ENCODE measurements at regions of chr4 and their contacts with region 1.

Region 1: GRCh38 chr4:172838108-172838507 is 330.5 kb upstream of the GALNT7 start:
- DNase-seq: no peak
- H3K4me3 ChIP-seq: no peak overlapping the region
- H3K27ac ChIP-seq: no peak overlapping the region
- H3K4me1 ChIP-seq: no peaks in the 10 kb centered on the region
- H3K27me3 ChIP-seq: no peaks in the 10 kb centered on the region
- CTCF ChIP-seq: no peak
- POLR2A ChIP-seq: no peak

Region 2: GRCh38 chr4:172596206-172596605 is 241.9 kb before region 1 on chr4:
- intact Hi-C with region 1: loop called (anchors 5 kb)
- DNase-seq: peak; percentile 3 to 6
- H3K4me3 ChIP-seq: no peak overlapping the region
- H3K27ac ChIP-seq: no peak overlapping the region
- H3K4me1 ChIP-seq: no peaks in the 10 kb centered on the region
- H3K27me3 ChIP-seq: no peaks in the 10 kb centered on the region
- CTCF ChIP-seq: peak in 3 of 6 experiments; percentile 13 to 42 (median 25)
- POLR2A ChIP-seq: no peak

Region 3: DNA sequence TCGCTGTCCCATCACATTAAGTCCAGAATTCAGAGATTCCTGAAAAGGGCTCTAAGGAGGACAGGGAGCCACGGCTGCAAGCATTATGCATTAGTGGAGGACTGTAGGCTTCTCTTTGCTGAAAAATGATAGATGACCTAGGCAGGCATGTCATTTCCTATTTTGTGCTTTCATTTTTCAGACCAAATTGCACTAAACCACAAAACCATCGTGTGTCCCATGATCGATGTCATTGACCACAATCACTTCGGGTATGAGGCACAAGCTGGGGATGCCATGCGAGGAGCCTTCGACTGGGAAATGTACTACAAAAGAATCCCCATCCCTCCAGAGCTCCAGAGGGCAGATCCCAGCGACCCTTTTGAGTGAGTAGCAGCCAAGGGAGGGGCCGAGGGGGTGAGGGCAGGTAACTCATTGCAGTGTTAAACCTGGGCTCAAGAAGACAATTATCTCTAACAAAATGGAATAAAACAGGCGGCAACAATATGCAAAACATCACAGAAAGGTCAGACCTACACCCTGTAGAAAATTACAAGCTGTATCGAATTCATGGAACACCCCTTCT is 24.7 kb before region 1 on chr4:
- intact Hi-C with region 1: no loop called
- DNase-seq: no peak
- H3K4me3 ChIP-seq: no peak overlapping the region
- H3K27ac ChIP-seq: no peak overlapping the region
- H3K4me1 ChIP-seq: peaks cover 3 to 11% of the 10 kb centered on the region in 2 donors
- H3K27me3 ChIP-seq: no peaks in the 10 kb centered on the region
- CTCF ChIP-seq: no peak
- POLR2A ChIP-seq: no peak

Region 4: DNA sequence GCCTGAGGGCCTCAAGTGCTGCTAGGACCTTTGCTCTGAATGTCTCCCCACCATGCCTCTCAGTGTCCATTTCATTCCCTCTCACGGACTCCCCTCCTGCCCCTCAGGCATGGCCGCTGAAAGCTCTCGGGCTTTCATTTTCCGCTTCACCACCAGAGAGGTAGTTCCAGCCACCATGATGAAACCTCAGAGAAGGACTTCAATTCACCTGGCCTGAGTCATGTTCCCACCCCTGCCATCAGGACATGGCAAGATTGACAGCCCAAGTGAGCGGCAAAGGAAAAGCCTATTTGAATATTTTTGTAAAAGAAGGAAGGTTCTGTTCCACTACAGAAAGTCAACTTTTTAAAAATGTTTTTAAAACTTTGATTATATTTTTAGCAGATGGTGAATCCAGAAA is 81.2 kb after region 1 on chr4:
- intact Hi-C with region 1: no loop called
- DNase-seq: no peak
- H3K4me3 ChIP-seq: no peak overlapping the region
- H3K27ac ChIP-seq: no peak overlapping the region
- H3K4me1 ChIP-seq: no peaks in the 10 kb centered on the region
- H3K27me3 ChIP-seq: no peaks in the 10 kb centered on the region
- CTCF ChIP-seq: no peak
- POLR2A ChIP-seq: no peak

Region 5: GRCh38 chr4:173243917-173244658 is 406.0 kb after region 1 on chr4:
- intact Hi-C with region 1: no loop called
- DNase-seq: no peak
- H3K4me3 ChIP-seq: no peak overlapping the region
- H3K27ac ChIP-seq: no peak overlapping the region
- H3K4me1 ChIP-seq: peaks cover 6 to 13% of the 10 kb centered on the region in 2 donors
- H3K27me3 ChIP-seq: no peaks in the 10 kb centered on the region
- CTCF ChIP-seq: no peak
- POLR2A ChIP-seq: no peak

Measured in thyroid gland (tissue), 4 donors.